ENCODE measurements at regions of chr7 and their contacts with region 1.

Region 1: DNA sequence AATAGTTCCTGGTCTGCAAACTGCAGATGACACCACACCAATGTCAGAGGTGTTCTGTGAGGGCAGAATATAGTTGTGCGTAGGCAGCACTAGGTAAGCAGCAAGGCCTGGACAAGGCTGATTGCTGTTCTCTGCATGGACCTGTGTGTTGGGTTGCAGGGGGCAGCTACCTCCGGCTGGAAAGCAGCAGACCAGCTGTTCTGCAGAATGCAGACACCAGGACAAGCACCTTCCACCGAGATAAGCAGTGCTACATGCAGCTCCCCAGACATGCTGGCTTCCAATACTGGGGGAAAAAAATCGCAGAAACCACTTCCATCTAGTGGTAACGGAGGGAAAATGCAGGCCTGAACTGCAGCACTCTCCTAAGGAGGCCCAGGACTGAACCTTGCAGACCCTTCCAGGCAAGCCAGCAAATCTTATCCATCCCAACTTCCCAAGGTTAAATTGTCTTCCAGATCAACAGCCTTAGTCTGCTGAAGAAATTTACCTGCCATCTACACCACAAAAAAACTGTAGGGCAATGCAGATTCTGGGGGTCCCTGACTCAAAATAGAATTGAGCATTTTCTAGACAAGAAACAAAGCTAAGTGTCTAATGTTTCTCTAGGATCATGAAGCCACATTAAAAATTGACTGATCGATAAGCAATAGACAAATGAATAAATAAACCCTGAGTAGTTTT is 50.5 kb upstream of the COBL start:
- H3K4me3 Mint-ChIP-seq: no peak overlapping the region
- H3K27ac Mint-ChIP-seq: no peak overlapping the region
- H3K4me1 Mint-ChIP-seq: no peaks in the 10 kb centered on the region
- H3K27me3 Mint-ChIP-seq: no peaks in the 10 kb centered on the region

Region 2: GRCh38 chr7:51161303-51161615 is 205.8 kb before region 1 on chr7:
- intact Hi-C with region 1: loop called (anchors 5 kb)
- H3K4me3 Mint-ChIP-seq: no peak overlapping the region
- H3K27ac Mint-ChIP-seq: no peak overlapping the region
- H3K4me1 Mint-ChIP-seq: peaks cover 8% of the 10 kb centered on the region
- H3K27me3 Mint-ChIP-seq: peaks cover 4% of the 10 kb centered on the region

Region 3: GRCh38 chr7:51229106-51229537 is 137.9 kb before region 1 on chr7:
- intact Hi-C with region 1: no loop called
- H3K4me3 Mint-ChIP-seq: no peak overlapping the region
- H3K27ac Mint-ChIP-seq: no peak overlapping the region
- H3K4me1 Mint-ChIP-seq: no peaks in the 10 kb centered on the region
- H3K27me3 Mint-ChIP-seq: peaks cover 2% of the 10 kb centered on the region

Measured in dendritic cell treated with granulocyte-macrophage colony-stimulating factor and Interleukin-4, amounts not matched to agents 40 ng/mL and 50 ng/mL, for 4 days (primary cell).